Left cardiac atrium (tissue), 4 donors: ENCODE measurements at regions of chr9 and their contacts with region 1.

Region 1: DNA sequence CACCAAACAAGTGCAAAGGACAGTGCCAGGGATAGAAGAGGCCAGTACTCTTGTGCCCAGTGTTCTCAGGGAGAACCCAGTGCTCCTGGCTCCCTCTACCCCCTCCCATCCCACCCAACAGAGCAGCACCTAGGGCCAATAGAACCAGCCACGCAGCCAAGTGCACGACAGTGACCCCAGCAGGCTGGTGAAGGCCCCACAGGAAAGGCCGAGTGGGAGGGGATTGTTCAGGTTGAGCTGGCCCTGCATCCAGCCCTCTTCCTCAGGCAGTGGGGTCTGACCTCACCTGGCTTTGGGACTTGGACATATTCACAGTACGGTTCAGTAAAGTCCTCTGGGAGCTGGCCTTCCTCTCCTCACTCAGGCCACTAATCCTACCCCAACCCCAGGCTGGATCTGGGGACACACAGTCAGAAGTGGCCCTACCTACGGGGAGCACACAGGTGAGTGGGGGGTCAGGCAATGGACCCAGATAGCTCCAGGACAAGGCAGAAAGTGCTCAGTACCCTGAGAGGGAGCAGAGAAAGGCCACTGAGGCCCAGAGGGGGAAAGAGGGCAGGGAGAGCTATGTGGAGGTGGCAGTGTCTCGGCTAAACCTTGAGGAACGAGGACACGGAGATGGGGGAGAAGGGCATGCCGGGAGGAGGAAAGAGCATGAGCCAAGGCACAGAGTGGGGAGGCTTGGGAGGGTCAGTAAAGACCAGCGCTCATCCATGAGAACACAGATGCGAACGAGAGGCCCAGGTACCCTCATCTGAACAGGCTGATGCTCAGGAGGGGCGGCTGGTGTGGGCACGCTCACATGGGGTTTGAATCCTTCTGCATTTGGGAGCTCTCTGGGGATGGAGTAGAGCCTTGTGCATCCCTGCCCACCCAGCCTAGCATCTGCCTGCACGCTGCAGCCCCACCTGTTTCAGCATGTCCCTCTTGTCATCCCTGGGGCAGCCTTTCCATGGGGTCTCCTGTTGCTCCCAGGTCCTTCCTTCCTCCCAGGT is 25.6 kb downstream of the POLR1E start:
- DNase-seq: no peak
- ATAC-seq: peak in 1 of 2 donors; percentile 34

Region 2: GRCh38 chr9:36903541-36904435 is 607.5 kb before region 1 on chr9:
- intact Hi-C with region 1: no loop called
- DNase-seq: peak; percentile 62
- ATAC-seq: peak in 1 of 2 donors; percentile 93

Region 3: DNA sequence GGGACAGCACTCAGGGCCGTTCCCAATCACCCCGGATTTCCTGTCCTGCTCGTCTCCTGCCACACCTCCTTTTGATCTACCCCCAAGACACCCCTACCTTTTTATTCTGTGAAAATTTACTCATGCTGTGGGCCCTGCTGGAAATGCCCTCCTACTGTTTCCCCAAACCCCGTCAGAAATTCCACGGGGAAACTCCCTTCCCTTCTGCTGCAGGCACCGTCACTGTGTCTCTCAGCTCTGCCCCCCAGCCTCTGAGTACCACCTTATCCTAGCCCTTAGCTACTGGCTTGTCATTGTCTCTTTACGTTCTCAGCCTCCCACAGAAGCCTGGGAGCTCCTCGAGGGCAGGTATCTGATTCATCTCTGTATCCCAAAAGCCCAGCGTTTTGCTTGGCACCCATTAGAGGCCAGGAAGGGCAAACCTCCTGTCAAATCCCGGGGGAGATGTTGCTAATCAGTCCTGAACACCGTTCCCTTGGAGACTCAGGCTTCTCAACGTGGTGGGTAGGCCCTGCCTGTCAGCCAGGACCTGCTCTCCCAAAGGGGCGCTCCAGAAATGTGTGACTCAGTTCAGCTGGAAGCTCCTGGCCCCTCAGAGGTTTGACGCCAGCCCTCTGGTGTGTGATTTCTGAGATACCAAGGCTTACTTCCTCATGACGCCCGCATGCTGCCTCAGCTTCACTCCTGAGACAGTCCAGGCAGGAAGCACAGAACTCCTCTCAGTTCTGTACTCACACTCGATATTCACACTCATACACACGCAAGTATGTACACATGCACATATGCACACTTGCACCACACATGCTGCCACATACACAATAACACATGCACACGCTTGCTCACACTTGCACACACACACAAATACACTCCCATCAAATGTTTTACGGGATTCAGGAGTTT is 139.5 kb before region 1 on chr9:
- intact Hi-C with region 1: no loop called
- DNase-seq: peak; percentile 31
- ATAC-seq: peak in 1 of 2 donors; percentile 65

Region 4: GRCh38 chr9:37471942-37472679 is 39.2 kb before region 1 on chr9:
- intact Hi-C with region 1: no loop called
- DNase-seq: no peak
- ATAC-seq: peak; percentile 80 to 93

Region 5: DNA sequence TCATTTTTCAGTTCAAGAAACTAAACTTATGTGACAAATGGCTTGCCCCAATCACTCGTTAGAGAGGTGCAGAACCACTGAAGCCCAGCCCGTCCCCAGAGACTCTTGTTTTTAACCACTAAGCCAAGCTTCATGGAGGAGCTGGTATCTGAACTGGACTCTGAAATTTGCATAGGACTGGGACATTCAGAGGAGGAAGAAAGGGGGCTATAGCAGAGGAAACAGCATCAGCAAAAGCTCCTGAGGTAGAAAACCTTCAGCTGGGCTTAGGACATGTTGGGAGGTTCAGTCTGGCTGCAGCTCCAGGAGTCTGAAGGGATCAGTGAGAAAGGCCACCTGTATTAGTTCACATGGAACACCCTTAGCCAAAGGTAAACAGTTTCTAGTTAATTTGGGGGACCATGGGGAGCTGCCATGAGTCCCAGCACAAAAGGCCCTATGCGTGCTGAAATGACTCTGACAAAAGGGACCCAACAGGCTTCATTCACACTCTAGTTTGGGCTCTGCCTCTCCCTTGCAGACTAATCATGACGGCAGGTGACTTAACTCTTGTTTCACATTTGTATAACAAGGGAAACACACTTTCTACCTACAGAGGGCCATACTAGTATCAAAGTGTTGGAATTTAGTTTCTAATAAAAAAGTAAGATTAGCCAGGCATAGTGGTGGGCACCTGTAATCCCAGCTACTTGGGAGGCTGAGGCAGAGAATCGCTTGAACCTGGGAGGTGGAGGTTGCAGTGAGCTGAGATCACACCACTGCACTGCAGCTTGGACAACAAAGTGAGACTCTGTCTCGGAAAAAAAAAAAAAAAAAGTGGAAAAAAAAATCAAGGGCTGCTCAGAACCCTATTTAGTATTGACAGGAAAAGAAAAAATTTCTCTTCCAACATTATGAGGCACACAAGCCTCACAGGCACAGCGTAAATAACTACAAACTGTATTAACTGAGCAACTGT is 54.6 kb after region 1 on chr9:
- intact Hi-C with region 1: loop called in 1 of 2 experiments (anchors 10 kb)
- DNase-seq: no peak
- ATAC-seq: no peak

Region 6: DNA sequence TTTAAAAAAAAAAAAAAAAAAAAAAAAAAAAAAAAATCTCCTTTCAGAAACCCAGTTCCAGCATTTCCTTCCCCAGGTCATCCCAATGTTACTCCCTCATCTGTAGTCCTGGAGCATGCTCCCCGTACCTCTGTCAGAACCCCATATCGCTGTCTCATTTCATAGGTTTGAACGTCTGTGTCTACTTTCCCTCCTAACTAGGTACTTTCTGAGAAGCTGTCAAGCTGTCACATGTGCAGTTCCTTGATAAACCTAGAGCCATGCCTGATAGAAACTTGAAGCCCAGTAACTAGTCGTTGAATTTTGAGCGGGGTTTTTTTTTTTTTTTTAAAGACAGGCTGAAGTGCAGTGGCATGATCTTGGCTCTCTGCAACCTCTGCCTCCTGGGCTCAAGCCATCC is 258.0 kb after region 1 on chr9:
- intact Hi-C with region 1: no loop called
- DNase-seq: no peak
- ATAC-seq: no peak